ENCODE measurements at regions of chr16 and their contacts with region 1.

Region 1: GRCh38 chr16:4090351-4090851 is 25.8 kb downstream of the ADCY9 start:
- DNase-seq: peak; percentile 83

Region 2: GRCh38 chr16:4053301-4053845 is 37.0 kb before region 1 on chr16:
- intact Hi-C with region 1: loop called (anchors 2 kb)
- DNase-seq: peak; percentile 85

Measured in cardiac septum (tissue), 1 donor.